ENCODE measurements at regions of chr6 and their contacts with region 1.

Region 1: GRCh38 chr6:11172501-11173332 is 59.8 kb downstream of the NEDD9 start:
- DNase-seq: peak; percentile 82
- ATAC-seq: peak; percentile 68
- H3K4me3 ChIP-seq: peak overlapping the region in 3 of 5 experiments; percentile 5 to 44 (median 25)
- H3K4me3 Mint-ChIP-seq: peak overlapping the region; percentile 64
- H3K27ac ChIP-seq: no peak overlapping the region
- H3K27ac Mint-ChIP-seq: no peak overlapping the region
- H3K4me1 ChIP-seq: peaks cover 7 to 9% of the 10 kb centered on the region in 2 donors
- H3K4me1 Mint-ChIP-seq: peaks cover 9% of the 10 kb centered on the region
- H3K27me3 ChIP-seq: no peaks in the 10 kb centered on the region
- H3K27me3 Mint-ChIP-seq: no peaks in the 10 kb centered on the region
- CTCF ChIP-seq: peak; percentile 90

Region 2: GRCh38 chr6:11093589-11094410 is 78.9 kb before region 1 on chr6 and contains the start of gene SMIM13:
- CTCF ChIA-PET with region 1: interaction called, 3 read pairs
- POLR2A ChIA-PET with region 1: no interaction called
- intact Hi-C with region 1: loop called (anchors 1 kb)
- DNase-seq: peak; percentile 96
- ATAC-seq: peak; percentile 90
- H3K4me3 ChIP-seq: peak within 1 kb of the TSS; percentile 65 to 95 (median 89)
- H3K4me3 Mint-ChIP-seq: peak within 1 kb of the TSS; percentile 97
- H3K27ac ChIP-seq: peak within 1 kb of the TSS; percentile 91 to 93
- H3K27ac Mint-ChIP-seq: peak within 1 kb of the TSS; percentile 97
- H3K4me1 ChIP-seq: peaks cover 12% of the 10 kb centered on the region in 2 donors
- H3K4me1 Mint-ChIP-seq: peaks cover 22% of the 10 kb centered on the region
- H3K27me3 ChIP-seq: no peaks in the 10 kb centered on the region
- H3K27me3 Mint-ChIP-seq: peaks cover 3% of the 10 kb centered on the region
- CTCF ChIP-seq: peak; percentile 74
- total RNA-seq, gene SMIM13: 5.5 and 7.0 TPM in 2 replicates

Region 3: DNA sequence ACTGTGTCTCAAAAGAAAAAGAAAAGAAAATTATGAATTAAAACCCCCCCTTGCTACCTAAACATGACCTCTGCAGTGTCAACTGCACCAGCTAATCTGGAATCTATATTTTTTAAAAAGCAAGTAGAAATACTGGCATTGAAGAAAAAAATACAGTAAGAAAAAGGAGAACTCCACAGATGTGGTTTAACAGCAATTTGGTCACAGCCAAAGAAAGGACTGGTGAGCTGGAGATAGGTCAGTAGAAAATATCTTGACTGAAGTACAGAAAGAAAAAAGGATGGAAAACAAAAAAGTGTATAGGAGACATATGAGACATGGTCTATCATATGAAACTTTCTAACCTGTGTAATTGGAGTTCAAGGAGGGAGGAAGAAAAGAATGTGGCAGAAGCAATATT is 17.1 kb before region 1 on chr6:
- CTCF ChIA-PET with region 1: interaction called, 15 read pairs
- POLR2A ChIA-PET with region 1: no interaction called
- intact Hi-C with region 1: no loop called
- DNase-seq: no peak
- ATAC-seq: no peak
- H3K4me3 ChIP-seq: no peak overlapping the region
- H3K4me3 Mint-ChIP-seq: no peak overlapping the region
- H3K27ac ChIP-seq: no peak overlapping the region
- H3K27ac Mint-ChIP-seq: no peak overlapping the region
- H3K4me1 ChIP-seq: no peaks in the 10 kb centered on the region
- H3K4me1 Mint-ChIP-seq: peaks cover 8% of the 10 kb centered on the region
- H3K27me3 ChIP-seq: no peaks in the 10 kb centered on the region
- H3K27me3 Mint-ChIP-seq: no peaks in the 10 kb centered on the region
- CTCF ChIP-seq: no peak

Region 4: DNA sequence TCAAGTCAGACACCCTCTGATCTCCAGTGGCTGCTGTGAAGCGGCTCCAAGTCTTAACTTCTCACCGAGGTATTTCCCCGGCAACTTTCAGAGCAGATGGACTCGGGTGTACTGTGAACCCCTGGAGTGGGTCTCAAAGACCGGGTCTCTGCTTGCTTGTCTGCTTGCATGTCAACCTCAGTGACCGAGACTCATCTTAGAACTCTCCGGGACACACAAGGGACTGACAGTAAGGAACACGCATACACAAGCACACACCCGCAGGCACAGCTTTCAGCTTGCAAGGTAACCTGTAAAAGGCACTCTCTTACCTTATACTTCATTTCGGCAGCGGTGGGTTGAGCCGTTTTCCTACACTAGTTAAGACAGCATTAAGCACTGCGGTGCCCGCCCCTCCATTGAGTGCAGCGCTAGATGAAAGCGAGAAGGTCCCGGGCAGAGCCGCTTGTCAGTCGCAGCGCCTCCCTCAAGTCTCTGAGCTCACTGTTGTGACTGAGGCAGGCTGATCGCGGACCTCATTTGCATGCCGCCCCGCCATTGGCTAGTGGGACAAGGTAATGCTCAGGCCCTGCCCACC is 59.6 kb after region 1 on chr6 and contains the start of gene NEDD9:
- CTCF ChIA-PET with region 1: interaction called, 11 read pairs
- POLR2A ChIA-PET with region 1: no interaction called
- intact Hi-C with region 1: loop called (anchors 2 kb)
- DNase-seq: peak; percentile 93
- ATAC-seq: peak; percentile 100
- H3K4me3 ChIP-seq: peak within 1 kb of the TSS; percentile 52 to 76 (median 67)
- H3K4me3 Mint-ChIP-seq: peak within 1 kb of the TSS; percentile 98
- H3K27ac ChIP-seq: peak within 1 kb of the TSS; percentile 70 to 81
- H3K27ac Mint-ChIP-seq: peak within 1 kb of the TSS; percentile 93
- H3K4me1 ChIP-seq: peaks cover 35 to 37% of the 10 kb centered on the region in 2 donors
- H3K4me1 Mint-ChIP-seq: peaks cover 54% of the 10 kb centered on the region
- H3K27me3 ChIP-seq: no peaks in the 10 kb centered on the region
- H3K27me3 Mint-ChIP-seq: no peaks in the 10 kb centered on the region
- CTCF ChIP-seq: no peak
- total RNA-seq, gene NEDD9: 46.2 and 50.9 TPM in 2 replicates

Region 5: GRCh38 chr6:11460001-11460668 is 287.4 kb after region 1 on chr6:
- CTCF ChIA-PET with region 1: interaction called, 15 read pairs
- POLR2A ChIA-PET with region 1: no interaction called
- intact Hi-C with region 1: no loop called
- DNase-seq: peak; percentile 51
- ATAC-seq: peak; percentile 19
- H3K4me3 ChIP-seq: peak overlapping the region; percentile 7 to 58 (median 19)
- H3K4me3 Mint-ChIP-seq: peak overlapping the region; percentile 87
- H3K27ac ChIP-seq: peak overlapping the region; percentile 88 to 96
- H3K27ac Mint-ChIP-seq: peak overlapping the region; percentile 95
- H3K4me1 ChIP-seq: peaks cover 51 to 55% of the 10 kb centered on the region in 2 donors
- H3K4me1 Mint-ChIP-seq: peaks cover 70% of the 10 kb centered on the region
- H3K27me3 ChIP-seq: no peaks in the 10 kb centered on the region
- H3K27me3 Mint-ChIP-seq: no peaks in the 10 kb centered on the region
- CTCF ChIP-seq: no peak

Region 6: GRCh38 chr6:11575408-11576033 is 402.8 kb after region 1 on chr6:
- CTCF ChIA-PET with region 1: interaction called, 8 read pairs
- POLR2A ChIA-PET with region 1: no interaction called
- intact Hi-C with region 1: loop called (anchors 10 kb)
- DNase-seq: peak; percentile 74
- ATAC-seq: peak; percentile 85
- H3K4me3 ChIP-seq: no peak overlapping the region
- H3K4me3 Mint-ChIP-seq: no peak overlapping the region
- H3K27ac ChIP-seq: no peak overlapping the region
- H3K27ac Mint-ChIP-seq: no peak overlapping the region
- H3K4me1 ChIP-seq: no peaks in the 10 kb centered on the region
- H3K4me1 Mint-ChIP-seq: peaks cover 3% of the 10 kb centered on the region
- H3K27me3 ChIP-seq: no peaks in the 10 kb centered on the region
- H3K27me3 Mint-ChIP-seq: no peaks in the 10 kb centered on the region
- CTCF ChIP-seq: peak; percentile 93

Measured in B cell (primary cell).